Sigmoid colon (tissue), 7 donors: ENCODE measurements at regions of chr10 and their contacts with region 1.

Region 1: GRCh38 chr10:33008499-33009243 is 50.6 kb upstream of the ITGB1 start:
- DNase-seq: peak; percentile 75
- H3K4me3 ChIP-seq: no peak overlapping the region
- H3K27ac ChIP-seq: peak overlapping the region in 2 of 4 donors; percentile 44 to 49
- H3K4me1 ChIP-seq: peaks cover 0 to 27% (median 19%) of the 10 kb centered on the region in 4 donors
- H3K27me3 ChIP-seq: no peaks in the 10 kb centered on the region
- CTCF ChIP-seq: peak; percentile 93 to 99 (median 98)
- EP300 ChIP-seq: no peak
- POLR2A ChIP-seq: no peak

Region 2: DNA sequence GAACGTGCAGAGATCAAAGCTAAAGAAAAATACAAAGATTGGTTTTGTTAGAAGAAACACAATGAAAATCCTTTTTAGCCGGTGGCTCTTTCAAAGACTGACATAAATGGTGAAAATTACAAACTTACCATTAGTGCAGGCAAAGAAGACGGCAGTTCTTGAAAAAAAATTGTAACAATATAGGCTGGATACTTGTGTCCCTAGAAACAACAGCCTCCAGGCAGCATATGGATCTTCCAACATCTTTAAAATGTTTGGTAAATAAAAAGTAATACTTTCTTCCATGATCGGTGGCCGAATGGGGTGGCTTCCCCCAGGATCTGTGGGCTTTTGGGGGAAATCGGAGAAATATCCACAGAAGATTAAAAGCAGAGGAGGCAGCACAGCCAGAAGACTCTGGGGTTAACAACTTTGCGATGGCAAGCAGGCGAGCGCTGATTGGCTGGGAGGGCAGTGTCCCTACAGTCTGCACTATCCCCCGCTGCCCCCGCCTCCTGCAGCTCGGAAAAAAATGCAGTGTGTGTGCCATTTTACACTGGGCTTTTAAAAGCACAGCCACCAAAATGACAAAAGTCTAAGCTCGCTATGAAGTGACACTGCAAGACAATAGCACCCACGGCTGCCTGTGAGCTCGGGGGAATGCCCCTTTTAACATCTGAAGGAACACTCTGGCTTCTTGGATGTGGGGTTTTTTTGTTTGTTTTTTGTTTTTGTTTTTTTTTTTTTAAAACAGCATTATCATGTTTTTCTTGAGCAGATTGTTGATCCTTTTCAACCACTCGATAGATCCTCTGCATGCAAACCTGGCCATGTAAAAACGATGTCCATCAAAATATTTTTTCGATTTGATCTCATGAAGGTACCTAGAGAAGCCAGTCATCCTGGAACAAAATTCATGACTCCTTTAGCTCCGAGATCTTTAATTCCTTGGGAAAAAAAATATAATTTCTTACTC is 630.0 kb before region 1 on chr10:
- intact Hi-C with region 1: loop called (anchors 5 kb)
- DNase-seq: peak; percentile 98
- H3K4me3 ChIP-seq: peak overlapping the region; percentile 51 to 76 (median 64)
- H3K27ac ChIP-seq: peak overlapping the region; percentile 76 to 91 (median 88)
- H3K4me1 ChIP-seq: peaks cover 0 to 39% (median 19%) of the 10 kb centered on the region in 4 donors
- H3K27me3 ChIP-seq: no peaks in the 10 kb centered on the region
- CTCF ChIP-seq: no peak
- EP300 ChIP-seq: peak in 1 of 4 donors; percentile 11
- POLR2A ChIP-seq: peak in 1 of 2 donors; percentile 29

Region 3: GRCh38 chr10:32445740-32446535 is 562.7 kb before region 1 on chr10 and contains the start of gene CCDC7:
- intact Hi-C with region 1: loop called (anchors 5 kb)
- DNase-seq: peak; percentile 91
- H3K4me3 ChIP-seq: peak within 1 kb of the TSS; percentile 60 to 73 (median 61)
- H3K27ac ChIP-seq: peak within 1 kb of the TSS; percentile 91 to 97 (median 94)
- H3K4me1 ChIP-seq: peaks cover 0 to 20% (median 10%) of the 10 kb centered on the region in 4 donors
- H3K27me3 ChIP-seq: no peaks in the 10 kb centered on the region
- CTCF ChIP-seq: peak in 2 of 4 experiments; percentile 23 to 46
- EP300 ChIP-seq: no peak
- POLR2A ChIP-seq: peak; percentile 19 to 48
- total RNA-seq, gene CCDC7: 42.9 to 84.9 (median 50.5) TPM

Region 4: DNA sequence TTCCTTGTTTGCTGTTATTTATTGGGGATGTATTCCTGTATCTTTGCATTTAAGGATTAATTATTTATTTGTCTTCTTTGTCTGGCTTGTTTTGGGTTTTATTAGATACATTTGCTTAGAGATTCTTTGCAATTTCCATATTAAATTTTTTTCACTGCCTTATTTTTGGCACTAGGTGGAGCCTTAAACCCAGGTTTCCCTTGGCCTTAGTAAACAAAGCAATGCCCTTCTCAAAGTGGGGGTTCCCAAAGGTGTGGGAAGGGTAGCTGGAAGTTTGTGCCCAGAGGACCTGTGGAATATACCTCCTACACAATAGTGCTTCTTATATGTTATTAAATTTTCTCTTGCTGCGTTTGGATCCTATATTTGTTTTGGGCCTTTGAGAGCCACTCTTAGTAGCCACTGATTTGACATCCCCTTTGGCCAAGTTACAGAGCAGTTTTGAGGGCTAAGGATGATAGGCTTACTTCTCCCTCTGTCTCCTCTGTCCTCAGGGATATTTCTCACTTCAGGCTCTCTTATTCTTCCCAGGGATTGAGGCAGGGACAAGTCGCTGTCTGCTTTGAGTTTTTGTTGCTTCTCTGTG is 213.0 kb before region 1 on chr10:
- intact Hi-C with region 1: loop called (anchors 1 kb)
- DNase-seq: no peak
- H3K4me3 ChIP-seq: no peak overlapping the region
- H3K27ac ChIP-seq: no peak overlapping the region
- H3K4me1 ChIP-seq: no peaks in the 10 kb centered on the region
- H3K27me3 ChIP-seq: no peaks in the 10 kb centered on the region
- CTCF ChIP-seq: peak; percentile 38 to 71 (median 66)
- EP300 ChIP-seq: no peak
- POLR2A ChIP-seq: no peak

Region 5: GRCh38 chr10:32929632-32930031 is 79.0 kb before region 1 on chr10:
- intact Hi-C with region 1: no loop called
- DNase-seq: no peak
- H3K4me3 ChIP-seq: no peak overlapping the region
- H3K27ac ChIP-seq: peak overlapping the region in 3 of 4 donors; percentile 30 to 54 (median 33)
- H3K4me1 ChIP-seq: peaks cover 0 to 50% (median 25%) of the 10 kb centered on the region in 4 donors
- H3K27me3 ChIP-seq: no peaks in the 10 kb centered on the region
- CTCF ChIP-seq: no peak
- EP300 ChIP-seq: no peak
- POLR2A ChIP-seq: no peak

Region 6: GRCh38 chr10:32958085-32959005 is 50.3 kb before region 1 on chr10 and contains the start of gene ITGB1:
- intact Hi-C with region 1: loop called (anchors 1 kb)
- DNase-seq: peak; percentile 99
- H3K4me3 ChIP-seq: peak within 1 kb of the TSS; percentile 63 to 97 (median 86)
- H3K27ac ChIP-seq: peak within 1 kb of the TSS; percentile 94 to 99 (median 98)
- H3K4me1 ChIP-seq: peaks cover 0 to 76% (median 64%) of the 10 kb centered on the region in 4 donors
- H3K27me3 ChIP-seq: no peaks in the 10 kb centered on the region
- CTCF ChIP-seq: no peak
- EP300 ChIP-seq: peak in 2 of 4 donors; percentile 64 to 80
- POLR2A ChIP-seq: peak; percentile 98
- total RNA-seq, gene ITGB1: 588 to 1,360 (median 919) TPM

Region 7: DNA sequence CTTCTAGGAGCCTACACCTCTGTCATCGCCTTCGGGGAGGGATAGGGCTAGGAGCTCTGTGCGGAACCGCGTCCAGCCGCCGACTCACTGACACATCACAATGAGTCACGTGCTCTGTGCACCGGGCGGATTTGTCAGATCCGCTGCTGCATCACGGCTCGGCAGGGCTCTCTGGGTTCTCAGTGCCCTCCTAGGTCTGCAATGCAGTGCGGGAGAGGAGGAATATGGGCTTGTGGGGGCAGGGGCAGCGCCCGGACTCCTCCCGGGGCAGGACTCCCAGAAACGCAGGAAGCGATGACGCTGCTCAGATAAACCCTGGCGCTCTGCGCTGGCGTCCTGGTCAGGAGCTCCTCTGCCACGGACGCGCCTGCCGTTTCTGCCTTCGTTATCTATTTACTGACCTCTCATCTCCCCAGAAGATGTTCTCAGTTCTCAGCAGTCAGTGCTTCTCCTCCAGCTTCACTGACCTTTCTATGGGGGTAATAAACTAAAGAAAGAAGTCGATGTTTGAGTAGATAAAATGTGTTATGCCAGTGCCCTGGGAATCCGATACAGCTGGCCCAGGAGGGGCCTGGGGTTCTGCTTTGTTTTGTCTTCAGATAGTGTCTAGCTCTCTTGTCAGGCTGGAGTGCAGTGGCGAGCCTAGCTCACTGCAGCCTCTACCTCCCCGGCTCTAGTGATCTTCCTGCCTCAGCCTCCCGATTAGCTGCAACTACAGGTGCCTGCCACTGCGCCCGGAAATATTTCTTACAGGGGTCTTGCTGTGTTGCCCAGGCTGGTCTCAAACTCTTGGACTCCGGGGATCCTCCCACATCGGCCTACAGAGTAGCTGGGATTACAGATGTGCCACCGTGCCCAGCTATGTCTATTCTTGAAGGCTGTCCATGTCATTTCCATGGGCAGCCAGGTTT is 27.9 kb before region 1 on chr10:
- intact Hi-C with region 1: loop called (anchors 2 kb)
- DNase-seq: peak; percentile 98
- H3K4me3 ChIP-seq: peak overlapping the region; percentile 42 to 53 (median 48)
- H3K27ac ChIP-seq: peak overlapping the region; percentile 91 to 96 (median 92)
- H3K4me1 ChIP-seq: peaks cover 0 to 33% (median 26%) of the 10 kb centered on the region in 4 donors
- H3K27me3 ChIP-seq: no peaks in the 10 kb centered on the region
- CTCF ChIP-seq: peak in 2 of 4 experiments; percentile 15 to 45
- EP300 ChIP-seq: peak in 2 of 4 donors; percentile 8 to 90
- POLR2A ChIP-seq: peak; percentile 91 to 94